Naive thymus-derived CD4-positive, alpha-beta T cell (primary cell): ENCODE measurements at regions of chr19 and their contacts with region 1.

Region 1: DNA sequence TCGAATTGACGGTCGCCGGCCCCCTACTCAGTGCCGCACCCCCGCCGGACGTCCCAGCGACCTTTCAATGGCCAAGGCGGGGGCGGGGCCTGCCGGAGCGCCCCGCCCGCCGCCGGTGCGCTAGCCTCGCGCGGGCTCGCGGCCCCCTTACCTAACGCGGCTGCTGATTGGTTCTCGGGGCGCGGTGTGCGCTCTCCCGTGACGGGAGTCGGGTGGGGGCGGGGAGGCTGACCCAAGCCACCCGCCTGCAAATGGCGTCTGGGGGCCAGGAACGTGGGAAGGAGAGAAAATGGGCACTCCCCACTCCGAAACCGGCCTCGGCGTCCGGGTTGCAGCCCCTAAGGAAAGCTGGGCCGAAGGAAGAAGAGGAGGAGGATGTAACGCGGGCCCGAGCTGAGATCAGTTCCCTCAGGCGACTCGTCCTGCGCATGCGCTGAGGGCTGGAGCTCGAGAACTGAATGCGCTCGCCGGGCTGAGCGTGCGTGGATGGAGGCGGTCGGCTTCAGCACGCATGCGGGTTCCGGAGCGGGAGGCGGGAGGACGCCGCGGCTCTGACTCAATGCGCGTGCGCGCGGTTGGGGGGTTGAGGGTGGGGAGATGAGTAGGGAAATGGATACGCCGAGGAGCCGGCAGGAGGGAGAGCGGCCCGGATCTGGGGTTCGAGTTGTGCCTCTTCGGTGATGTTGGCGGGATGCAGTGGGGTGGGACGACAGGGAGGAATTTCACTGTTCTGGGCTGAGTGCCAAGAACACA is at the start of gene SMG9:
- DNase-seq: peak; percentile 98 to 100 (median 99)
- ATAC-seq: peak; percentile 92
- H3K4me3 ChIP-seq: peak within 1 kb of the TSS; percentile 95
- H3K4me3 Mint-ChIP-seq: peak within 1 kb of the TSS; percentile 94 to 99 (median 97)
- H3K27ac ChIP-seq: peak within 1 kb of the TSS; percentile 85
- H3K27ac Mint-ChIP-seq: peak within 1 kb of the TSS; percentile 96 to 100 (median 98)
- H3K4me1 ChIP-seq: peaks cover 20 to 27% of the 10 kb centered on the region in 2 donors
- H3K4me1 Mint-ChIP-seq: peaks cover 5 to 62% (median 45%) of the 10 kb centered on the region in 7 donors
- H3K27me3 ChIP-seq: no peaks in the 10 kb centered on the region
- H3K27me3 Mint-ChIP-seq: peaks cover 0 to 6% (median 0%) of the 10 kb centered on the region in 5 donors
- total RNA-seq, gene SMG9: 48.5 to 75.9 (median 53.9) TPM

Region 2: GRCh38 chr19:43700395-43701000 is 54.2 kb before region 1 on chr19:
- CTCF ChIA-PET with region 1: interaction called, 3 read pairs
- POLR2A ChIA-PET with region 1: no interaction called
- intact Hi-C with region 1: loop called in 1 of 2 experiments (anchors 2 kb)
- DNase-seq: peak in 4 of 9 donors; percentile 1 to 10 (median 4)
- ATAC-seq: peak; percentile 15
- H3K4me3 ChIP-seq: no peak overlapping the region
- H3K4me3 Mint-ChIP-seq: peak overlapping the region; percentile 66 to 92 (median 81)
- H3K27ac ChIP-seq: peak overlapping the region; percentile 34
- H3K27ac Mint-ChIP-seq: peak overlapping the region; percentile 47 to 100 (median 91)
- H3K4me1 ChIP-seq: peaks cover 3 to 13% of the 10 kb centered on the region in 2 donors
- H3K4me1 Mint-ChIP-seq: peaks cover 12 to 28% (median 22%) of the 10 kb centered on the region in 7 donors
- H3K27me3 ChIP-seq: peaks cover 0 to 3% of the 10 kb centered on the region in 2 donors
- H3K27me3 Mint-ChIP-seq: peaks cover 0 to 17% (median 13%) of the 10 kb centered on the region in 5 donors

Region 3: GRCh38 chr19:43765109-43765876 is 10.6 kb after region 1 on chr19:
- CTCF ChIA-PET with region 1: interaction called, 4 read pairs
- POLR2A ChIA-PET with region 1: interaction called, 22 read pairs
- intact Hi-C with region 1: loop called (anchors 1 kb)
- DNase-seq: peak in 8 of 9 donors; percentile 20 to 86 (median 38)
- ATAC-seq: peak; percentile 81
- H3K4me3 ChIP-seq: no peak overlapping the region
- H3K4me3 Mint-ChIP-seq: peak overlapping the region; percentile 35 to 80 (median 67)
- H3K27ac ChIP-seq: peak overlapping the region; percentile 45
- H3K27ac Mint-ChIP-seq: peak overlapping the region; percentile 78 to 94 (median 88)
- H3K4me1 ChIP-seq: peaks cover 23 to 32% of the 10 kb centered on the region in 2 donors
- H3K4me1 Mint-ChIP-seq: peaks cover 32 to 73% (median 40%) of the 10 kb centered on the region in 7 donors
- H3K27me3 ChIP-seq: no peaks in the 10 kb centered on the region
- H3K27me3 Mint-ChIP-seq: no peaks in the 10 kb centered on the region

Region 4: GRCh38 chr19:43774103-43774939 is 19.6 kb after region 1 on chr19:
- CTCF ChIA-PET with region 1: interaction called, 3 read pairs
- POLR2A ChIA-PET with region 1: interaction called, 28 read pairs
- intact Hi-C with region 1: loop called in 1 of 2 experiments (anchors 1 kb)
- DNase-seq: no peak
- ATAC-seq: no peak
- H3K4me3 ChIP-seq: no peak overlapping the region
- H3K4me3 Mint-ChIP-seq: no peak overlapping the region
- H3K27ac ChIP-seq: no peak overlapping the region
- H3K27ac Mint-ChIP-seq: peak overlapping the region in 1 of 9 donors; percentile 22
- H3K4me1 ChIP-seq: peaks cover 17 to 32% of the 10 kb centered on the region in 2 donors
- H3K4me1 Mint-ChIP-seq: peaks cover 34 to 52% (median 42%) of the 10 kb centered on the region in 7 donors
- H3K27me3 ChIP-seq: no peaks in the 10 kb centered on the region
- H3K27me3 Mint-ChIP-seq: no peaks in the 10 kb centered on the region